Posterior cingulate gyrus (tissue), 11 donors: ENCODE measurements at regions of chr12 and their contacts with region 1.

Region 1: DNA sequence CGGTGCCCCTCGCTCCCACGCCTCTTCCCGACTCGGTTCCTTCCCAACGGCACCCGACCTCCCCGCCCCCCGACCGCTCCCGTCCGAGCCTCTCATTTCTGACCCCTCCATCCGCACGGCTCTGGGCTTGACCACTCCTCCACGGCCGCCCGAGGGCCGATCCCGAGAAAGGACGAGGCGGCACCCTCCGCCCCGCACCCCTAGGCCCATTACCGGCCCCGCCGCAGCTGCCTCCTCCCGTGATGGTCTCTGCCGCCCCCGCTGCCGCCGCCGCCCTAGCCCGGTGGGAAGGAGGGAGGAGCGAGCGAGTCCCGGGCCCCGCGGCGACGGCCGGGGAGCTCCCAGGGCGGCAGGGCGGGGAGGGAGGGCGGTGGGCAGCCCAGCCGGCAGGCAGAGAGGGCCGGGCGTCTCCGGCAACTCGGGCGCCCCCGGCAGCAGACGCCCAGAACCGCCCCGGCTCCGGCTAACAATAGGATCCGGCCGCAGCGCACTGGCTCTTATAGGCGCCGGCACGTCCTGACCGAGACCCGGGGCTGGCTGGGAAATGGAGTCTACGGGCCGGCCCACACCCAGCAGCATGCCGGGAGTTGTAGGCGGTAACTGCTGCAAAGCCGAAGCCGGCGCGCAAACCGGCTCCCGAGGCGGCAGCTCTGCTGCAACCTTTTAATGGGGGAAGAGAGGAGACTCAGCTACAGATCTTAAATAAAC is at the start of gene CSRNP2:
- DNase-seq: peak; percentile 95 to 100 (median 98)

Region 2: GRCh38 chr12:51047655-51048540 is 35.4 kb before region 1 on chr12 and contains the start of gene LETMD1:
- intact Hi-C with region 1: loop called (anchors 2 kb)
- DNase-seq: peak; percentile 91 to 99 (median 95)

Region 3: DNA sequence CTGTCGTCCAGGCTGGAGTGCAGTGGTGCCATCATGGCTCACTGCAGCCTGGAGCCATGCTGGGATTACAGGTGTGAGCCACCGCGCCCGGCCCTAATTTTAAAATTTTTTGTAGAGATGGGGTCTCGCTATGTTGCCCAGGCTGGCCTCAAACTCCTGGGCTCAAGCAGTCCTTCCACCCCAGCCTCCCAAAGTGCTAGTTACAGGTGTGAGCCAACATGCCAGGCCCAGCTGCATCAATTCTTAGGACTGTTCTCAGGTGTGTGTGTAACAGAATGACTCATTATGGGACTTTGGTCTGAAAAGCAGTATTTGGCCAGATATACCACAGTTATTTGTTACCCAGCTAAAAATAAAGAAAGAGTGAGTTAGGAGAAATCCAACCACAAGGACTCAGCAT is 17.8 kb before region 1 on chr12:
- intact Hi-C with region 1: no loop called
- DNase-seq: peak in 1 of 10 donors; percentile 39

Region 4: DNA sequence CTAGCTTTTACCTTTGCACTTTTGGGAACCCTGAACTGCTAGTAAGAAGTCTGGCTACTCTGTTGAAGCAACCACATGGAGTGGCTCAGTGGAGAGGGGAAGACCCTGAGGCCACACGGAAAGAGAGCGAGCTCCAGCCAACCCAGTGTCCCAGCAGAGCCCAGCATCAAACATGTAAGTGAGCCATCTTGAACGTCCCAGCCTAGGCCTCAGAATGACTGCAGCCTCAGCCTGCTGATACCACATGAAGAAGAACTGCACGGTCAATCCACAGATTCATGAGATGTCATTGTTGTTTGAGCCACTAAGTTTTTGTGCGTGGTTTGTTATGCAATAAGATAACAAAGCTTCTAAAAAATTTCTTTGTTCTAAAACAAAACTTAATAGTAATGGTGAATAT is 49.4 kb after region 1 on chr12:
- intact Hi-C with region 1: no loop called
- DNase-seq: no peak

Region 5: GRCh38 chr12:51172515-51173431 is 89.5 kb after region 1 on chr12 and contains the start of gene TFCP2:
- intact Hi-C with region 1: loop called (anchors 5 kb)
- DNase-seq: peak; percentile 91 to 100 (median 96)

Region 6: GRCh38 chr12:51238510-51239334 is 155.4 kb after region 1 on chr12 and contains the start of gene DAZAP2:
- intact Hi-C with region 1: loop called (anchors 10 kb)
- DNase-seq: peak; percentile 93 to 99 (median 96)